ENCODE measurements at regions of chr16 and their contacts with region 1.

Region 1: DNA sequence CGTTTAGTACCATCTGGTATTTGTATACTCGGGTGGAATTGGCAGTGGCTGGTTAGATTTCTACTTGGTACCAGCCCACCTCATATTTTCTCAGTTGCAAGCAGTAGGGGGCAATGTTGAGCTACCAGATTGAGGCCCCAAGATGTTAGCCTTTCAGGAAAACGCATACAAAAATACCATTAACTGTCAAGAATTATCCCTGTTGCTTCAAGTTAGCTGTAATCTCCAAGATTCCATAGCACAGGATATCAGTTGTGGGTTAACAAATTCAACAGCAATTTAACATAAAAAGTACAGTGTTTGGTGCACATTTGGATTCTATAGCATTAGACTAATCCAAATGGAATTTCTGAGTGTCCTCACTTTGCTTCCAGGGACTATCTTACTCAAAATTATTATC is 188.2 kb downstream of the FTO start:
- DNase-seq: peak in 1 of 2 experiments; percentile 61
- H3K4me3 ChIP-seq: no peak overlapping the region
- H3K27ac ChIP-seq: no peak overlapping the region
- H3K4me1 ChIP-seq: no peaks in the 10 kb centered on the region; a peak in 1 of 7 replicates
- H3K27me3 ChIP-seq: no peaks in the 10 kb centered on the region
- CTCF ChIP-seq: peak in 2 of 3 experiments; percentile 63 to 68; a peak in 3 of 4 replicates
- EP300 ChIP-seq: no peak
- POLR2A ChIP-seq: no peak
- RAD21 ChIP-seq: peak; percentile 78 to 82

Region 2: GRCh38 chr16:53773150-53773846 is 118.9 kb before region 1 on chr16:
- CTCF ChIA-PET with region 1: interaction called, 20 read pairs
- POLR2A ChIA-PET with region 1: no interaction called
- DNase-seq: no peak
- H3K4me3 ChIP-seq: no peak overlapping the region
- H3K27ac ChIP-seq: no peak overlapping the region
- H3K4me1 ChIP-seq: peaks cover 0 to 3% (median 1%) of the 10 kb centered on the region in 4 experiments; a peak in 1 of 7 replicates
- H3K27me3 ChIP-seq: no peaks in the 10 kb centered on the region
- CTCF ChIP-seq: peak in 2 of 3 experiments; percentile 50 to 66; a peak in 3 of 4 replicates
- EP300 ChIP-seq: no peak
- POLR2A ChIP-seq: no peak
- RAD21 ChIP-seq: peak; percentile 80 to 89

Region 3: DNA sequence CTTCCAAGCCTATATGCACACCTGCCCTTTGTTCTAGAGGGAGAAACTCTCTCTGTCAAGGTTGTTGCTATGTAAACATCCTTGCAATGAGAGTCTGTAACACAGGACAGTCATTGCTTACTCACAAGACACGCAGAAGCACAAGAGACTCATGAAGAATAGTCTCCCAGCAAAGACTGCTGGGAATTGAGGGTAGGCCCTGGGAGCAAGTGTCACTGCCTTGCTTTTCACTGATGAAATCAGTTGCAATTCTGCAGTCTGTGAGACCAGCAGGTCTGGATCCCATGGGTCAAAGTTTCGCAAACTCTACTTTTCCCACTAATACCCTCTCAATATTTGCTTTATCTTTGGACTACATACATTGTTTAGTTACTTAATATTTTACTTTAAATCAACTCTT is 10.8 kb before region 1 on chr16:
- CTCF ChIA-PET with region 1: interaction called, 13 read pairs
- POLR2A ChIA-PET with region 1: interaction called, 3 read pairs
- DNase-seq: no peak
- H3K4me3 ChIP-seq: no peak overlapping the region
- H3K27ac ChIP-seq: no peak overlapping the region
- H3K4me1 ChIP-seq: no peaks in the 10 kb centered on the region
- H3K27me3 ChIP-seq: no peaks in the 10 kb centered on the region
- CTCF ChIP-seq: no peak
- EP300 ChIP-seq: no peak
- POLR2A ChIP-seq: no peak
- RAD21 ChIP-seq: no peak

Measured in H1 (cell line).